Natural killer cell (primary cell): ENCODE measurements at regions of chr7 and their contacts with region 1.

Region 1: DNA sequence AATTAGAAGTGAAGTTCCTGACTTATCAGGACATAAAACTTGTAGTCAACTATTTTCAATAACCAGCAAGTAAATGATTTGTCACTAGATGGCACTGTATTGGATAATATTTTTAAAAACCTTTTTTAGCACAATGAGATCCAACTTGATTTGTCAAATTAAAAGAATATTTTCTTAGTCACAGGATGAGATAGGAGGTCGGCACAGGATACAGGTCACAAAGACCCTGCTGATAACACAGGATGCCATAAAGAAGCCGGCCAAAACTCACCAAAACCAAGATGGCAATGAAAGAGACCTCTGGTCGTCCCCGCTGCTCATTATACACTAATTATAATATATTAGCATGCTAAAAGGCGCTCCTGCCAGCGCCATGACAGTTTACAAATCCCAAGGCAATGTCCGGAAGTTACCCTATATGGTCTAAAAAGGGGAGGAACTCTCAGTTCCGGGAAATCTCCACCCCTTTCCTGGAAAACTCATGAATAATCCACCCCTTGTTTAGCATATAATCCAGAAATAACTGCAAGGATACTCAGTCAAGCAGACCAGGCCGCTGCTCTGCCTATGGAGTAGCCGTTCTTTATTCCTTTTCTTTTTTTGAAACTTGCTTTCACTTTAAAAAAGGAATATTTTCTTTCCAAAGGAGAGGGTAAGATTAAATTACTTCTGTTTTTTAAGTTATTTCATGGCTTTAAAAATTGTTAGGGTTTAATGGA is 255.7 kb upstream of the MKLN1 start:
- DNase-seq: no peak
- ATAC-seq: no peak
- H3K4me3 ChIP-seq: no peak overlapping the region
- H3K4me3 Mint-ChIP-seq: peak overlapping the region; percentile 53
- H3K27ac ChIP-seq: no peak overlapping the region
- H3K27ac Mint-ChIP-seq: no peak overlapping the region
- H3K4me1 ChIP-seq: peaks cover 19% of the 10 kb centered on the region
- H3K4me1 Mint-ChIP-seq: peaks cover 26 to 78% of the 10 kb centered on the region in 2 donors
- H3K27me3 ChIP-seq: no peaks in the 10 kb centered on the region
- H3K27me3 Mint-ChIP-seq: no peaks in the 10 kb centered on the region
- CTCF ChIP-seq: peak; percentile 47

Region 2: DNA sequence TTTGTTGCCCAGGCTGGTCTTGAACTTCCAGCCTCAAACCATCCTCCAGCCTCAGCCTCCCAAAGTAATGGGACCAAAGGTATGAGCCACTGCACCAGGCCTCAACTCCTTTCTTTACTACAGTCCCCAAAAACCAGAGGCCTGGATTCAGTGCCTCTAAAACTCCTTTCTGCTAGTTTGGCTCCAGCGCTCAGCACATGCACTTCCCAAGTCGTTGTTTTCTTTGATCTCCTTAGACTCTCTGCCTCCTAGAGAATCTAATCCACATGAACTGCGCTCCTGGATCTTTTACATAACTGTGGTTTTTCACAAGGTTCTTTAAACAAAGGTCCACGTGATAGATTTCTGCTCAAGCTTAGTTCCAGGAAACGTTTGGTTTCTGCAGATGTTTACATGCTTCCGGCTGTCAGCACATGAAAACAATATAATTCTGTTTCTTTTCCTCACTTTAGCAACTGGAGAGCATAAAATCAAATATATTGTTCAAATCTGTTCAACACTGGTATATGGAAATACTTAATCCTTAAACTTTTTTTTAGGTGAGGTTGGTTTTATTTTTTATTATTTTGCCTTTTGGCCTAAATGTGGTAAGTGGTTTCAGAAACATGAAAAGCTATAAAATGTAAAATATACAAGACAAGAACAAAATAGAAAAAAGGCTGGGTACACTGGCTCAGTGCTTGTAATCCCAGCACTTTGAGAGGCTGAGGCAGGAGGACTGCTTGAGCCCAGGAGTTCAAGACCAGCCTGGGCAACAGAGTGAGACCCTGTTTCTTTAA is 14.7 kb before region 1 on chr7:
- intact Hi-C with region 1: loop called (anchors 2 kb)
- DNase-seq: peak in 1 of 2 donors; percentile 78
- ATAC-seq: peak; percentile 32 to 76 (median 56)
- H3K4me3 ChIP-seq: peak overlapping the region; percentile 1
- H3K4me3 Mint-ChIP-seq: peak overlapping the region; percentile 93
- H3K27ac ChIP-seq: peak overlapping the region; percentile 92
- H3K27ac Mint-ChIP-seq: peak overlapping the region; percentile 96 to 97
- H3K4me1 ChIP-seq: peaks cover 52% of the 10 kb centered on the region
- H3K4me1 Mint-ChIP-seq: peaks cover 66 to 78% of the 10 kb centered on the region in 2 donors
- H3K27me3 ChIP-seq: no peaks in the 10 kb centered on the region
- H3K27me3 Mint-ChIP-seq: no peaks in the 10 kb centered on the region
- CTCF ChIP-seq: no peak

Region 3: GRCh38 chr7:131355921-131356777 is 284.2 kb after region 1 on chr7:
- intact Hi-C with region 1: loop called (anchors 5 kb)
- DNase-seq: no peak
- ATAC-seq: no peak
- H3K4me3 ChIP-seq: no peak overlapping the region
- H3K4me3 Mint-ChIP-seq: no peak overlapping the region
- H3K27ac ChIP-seq: no peak overlapping the region
- H3K27ac Mint-ChIP-seq: no peak overlapping the region
- H3K4me1 ChIP-seq: peaks cover 6% of the 10 kb centered on the region
- H3K4me1 Mint-ChIP-seq: peaks cover 63 to 74% of the 10 kb centered on the region in 2 donors
- H3K27me3 ChIP-seq: no peaks in the 10 kb centered on the region
- H3K27me3 Mint-ChIP-seq: no peaks in the 10 kb centered on the region
- CTCF ChIP-seq: no peak

Region 4: GRCh38 chr7:131424219-131424822 is 352.4 kb after region 1 on chr7:
- intact Hi-C with region 1: loop called (anchors 10 kb)
- DNase-seq: peak in 1 of 2 donors; percentile 66
- ATAC-seq: peak; percentile 75 to 90 (median 76)
- H3K4me3 ChIP-seq: no peak overlapping the region
- H3K4me3 Mint-ChIP-seq: no peak overlapping the region
- H3K27ac ChIP-seq: no peak overlapping the region
- H3K27ac Mint-ChIP-seq: no peak overlapping the region
- H3K4me1 ChIP-seq: no peaks in the 10 kb centered on the region
- H3K4me1 Mint-ChIP-seq: peaks cover 6% of the 10 kb centered on the region in 2 donors
- H3K27me3 ChIP-seq: no peaks in the 10 kb centered on the region
- H3K27me3 Mint-ChIP-seq: no peaks in the 10 kb centered on the region
- CTCF ChIP-seq: peak; percentile 61